Uterus (tissue), 4 donors: ENCODE measurements at regions of chr11 and their contacts with region 1.

Region 1: GRCh38 chr11:78812513-78813293 is 238.0 kb upstream of the NARS2 start:
- DNase-seq: no peak
- H3K4me3 ChIP-seq: no peak overlapping the region
- H3K27ac ChIP-seq: no peak overlapping the region
- H3K4me1 ChIP-seq: peaks cover 5% of the 10 kb centered on the region in 2 donors
- H3K27me3 ChIP-seq: no peaks in the 10 kb centered on the region
- CTCF ChIP-seq: no peak
- POLR2A ChIP-seq: no peak

Region 2: GRCh38 chr11:78251083-78251775 is 561.5 kb before region 1 on chr11:
- intact Hi-C with region 1: no loop called
- DNase-seq: no peak
- H3K4me3 ChIP-seq: no peak overlapping the region
- H3K27ac ChIP-seq: peak overlapping the region; percentile 32 to 35
- H3K4me1 ChIP-seq: peaks cover 6 to 11% of the 10 kb centered on the region in 2 donors
- H3K27me3 ChIP-seq: no peaks in the 10 kb centered on the region
- CTCF ChIP-seq: no peak
- POLR2A ChIP-seq: no peak

Region 3: GRCh38 chr11:78350646-78351165 is 462.0 kb before region 1 on chr11:
- intact Hi-C with region 1: no loop called
- DNase-seq: no peak
- H3K4me3 ChIP-seq: peak overlapping the region in 1 of 2 donors; percentile 25
- H3K27ac ChIP-seq: peak overlapping the region; percentile 53 to 80
- H3K4me1 ChIP-seq: peaks cover 1 to 9% of the 10 kb centered on the region in 2 donors
- H3K27me3 ChIP-seq: no peaks in the 10 kb centered on the region
- CTCF ChIP-seq: no peak
- POLR2A ChIP-seq: no peak

Region 4: DNA sequence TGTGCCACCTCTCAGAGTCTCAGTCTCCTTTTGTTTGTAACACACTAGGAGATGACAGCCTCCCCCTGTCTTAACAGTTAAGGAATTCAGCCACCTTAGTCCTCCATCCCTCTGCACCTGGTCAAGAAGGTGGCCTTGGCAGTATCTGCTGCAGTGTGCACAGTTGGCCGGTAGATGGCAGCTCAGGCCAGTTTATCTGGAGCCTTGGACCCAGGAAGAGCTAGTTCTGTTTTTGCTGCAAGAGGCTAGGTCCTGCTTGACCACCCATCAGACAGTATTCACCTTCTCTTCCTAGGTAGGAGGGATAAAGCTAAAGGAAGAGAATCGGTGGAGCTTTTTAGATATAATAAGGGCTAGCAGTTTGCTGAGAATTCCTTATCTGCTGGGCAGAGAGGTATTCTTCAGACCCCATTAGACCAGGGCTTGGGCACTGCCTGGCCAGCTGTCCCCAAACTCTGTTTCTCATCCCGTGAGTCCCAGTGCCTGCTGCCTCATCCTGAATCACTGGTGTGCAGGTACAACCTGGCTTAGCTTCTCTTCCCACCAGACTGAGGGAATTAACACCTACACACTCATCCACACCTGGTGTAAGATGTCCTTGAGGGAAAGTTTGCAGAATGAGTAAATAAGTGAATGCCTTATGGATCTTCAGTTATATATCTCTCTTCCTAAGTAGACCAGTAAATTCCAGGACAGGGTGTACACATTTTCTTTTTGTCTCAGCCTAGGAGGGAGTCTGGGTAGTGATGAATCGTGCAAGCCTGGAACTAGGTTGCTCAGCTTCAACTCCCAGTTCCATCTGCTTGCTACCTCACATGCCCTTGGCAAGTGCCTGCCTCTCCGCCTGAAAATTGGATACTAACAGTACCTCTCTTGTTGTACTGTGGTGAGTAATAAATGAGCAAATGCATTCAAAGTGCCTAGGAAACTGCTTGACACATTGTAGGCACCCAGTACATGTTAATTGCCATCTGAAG is 167.2 kb before region 1 on chr11:
- intact Hi-C with region 1: loop called (anchors 10 kb)
- DNase-seq: peak; percentile 40 to 70
- H3K4me3 ChIP-seq: no peak overlapping the region
- H3K27ac ChIP-seq: no peak overlapping the region
- H3K4me1 ChIP-seq: no peaks in the 10 kb centered on the region
- H3K27me3 ChIP-seq: no peaks in the 10 kb centered on the region
- CTCF ChIP-seq: peak; percentile 90 to 92 (median 90)
- POLR2A ChIP-seq: no peak

Region 5: GRCh38 chr11:78715639-78716311 is 96.9 kb before region 1 on chr11:
- intact Hi-C with region 1: no loop called
- DNase-seq: no peak
- H3K4me3 ChIP-seq: no peak overlapping the region
- H3K27ac ChIP-seq: no peak overlapping the region
- H3K4me1 ChIP-seq: no peaks in the 10 kb centered on the region
- H3K27me3 ChIP-seq: no peaks in the 10 kb centered on the region
- CTCF ChIP-seq: peak in 1 of 4 experiments; percentile 19
- POLR2A ChIP-seq: no peak

Region 6: DNA sequence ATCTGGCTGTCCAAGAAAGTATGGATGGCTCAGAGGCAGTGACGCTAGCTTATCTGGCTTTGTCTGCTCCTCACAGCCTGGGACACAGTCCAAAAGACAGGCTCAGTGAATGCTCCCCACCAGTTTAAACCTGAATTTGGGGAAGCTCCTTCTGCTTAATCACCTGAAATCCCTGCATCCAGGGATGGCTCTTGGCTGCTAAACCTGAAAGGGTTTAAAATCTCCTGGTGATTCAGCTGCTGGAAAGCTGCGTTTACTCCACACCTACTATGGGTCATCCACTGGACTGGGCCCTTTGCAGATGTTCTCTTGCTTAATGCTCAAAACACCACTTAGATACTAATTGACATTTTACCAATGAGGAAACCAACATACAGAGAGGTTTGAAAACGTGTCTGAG is 64.0 kb after region 1 on chr11:
- intact Hi-C with region 1: no loop called
- DNase-seq: no peak
- H3K4me3 ChIP-seq: no peak overlapping the region
- H3K27ac ChIP-seq: no peak overlapping the region
- H3K4me1 ChIP-seq: no peaks in the 10 kb centered on the region
- H3K27me3 ChIP-seq: no peaks in the 10 kb centered on the region
- CTCF ChIP-seq: no peak
- POLR2A ChIP-seq: no peak